IMR-90 (cell line): ENCODE measurements at regions of chr2 and their contacts with region 1.

Region 1: GRCh38 chr2:11743846-11744553 is 2.4 kb upstream of the LPIN1 start:
- DNase-seq: peak; percentile 100
- ATAC-seq: peak; percentile 87
- H3K4me3 ChIP-seq: peak overlapping the region; percentile 10
- H3K27ac ChIP-seq: peak overlapping the region; percentile 88
- H3K4me1 ChIP-seq: peaks cover 16% of the 10 kb centered on the region
- H3K27me3 ChIP-seq: no peaks in the 10 kb centered on the region
- CTCF ChIP-seq: no peak
- POLR2A ChIP-seq: no peak
- RAD21 ChIP-seq: no peak

Region 2: GRCh38 chr2:10919771-10920621 is 824.0 kb before region 1 on chr2:
- CTCF ChIA-PET with region 1: no interaction called
- POLR2A ChIA-PET with region 1: no interaction called
- dilution Hi-C with region 1: no loop called
- in situ Hi-C with region 1: no loop called
- intact Hi-C with region 1: loop called (anchors 5 kb)
- DNase-seq: no peak
- ATAC-seq: no peak
- H3K4me3 ChIP-seq: no peak overlapping the region
- H3K27ac ChIP-seq: no peak overlapping the region
- H3K4me1 ChIP-seq: peaks cover 13% of the 10 kb centered on the region
- H3K27me3 ChIP-seq: no peaks in the 10 kb centered on the region
- CTCF ChIP-seq: no peak
- POLR2A ChIP-seq: no peak
- RAD21 ChIP-seq: no peak

Region 3: DNA sequence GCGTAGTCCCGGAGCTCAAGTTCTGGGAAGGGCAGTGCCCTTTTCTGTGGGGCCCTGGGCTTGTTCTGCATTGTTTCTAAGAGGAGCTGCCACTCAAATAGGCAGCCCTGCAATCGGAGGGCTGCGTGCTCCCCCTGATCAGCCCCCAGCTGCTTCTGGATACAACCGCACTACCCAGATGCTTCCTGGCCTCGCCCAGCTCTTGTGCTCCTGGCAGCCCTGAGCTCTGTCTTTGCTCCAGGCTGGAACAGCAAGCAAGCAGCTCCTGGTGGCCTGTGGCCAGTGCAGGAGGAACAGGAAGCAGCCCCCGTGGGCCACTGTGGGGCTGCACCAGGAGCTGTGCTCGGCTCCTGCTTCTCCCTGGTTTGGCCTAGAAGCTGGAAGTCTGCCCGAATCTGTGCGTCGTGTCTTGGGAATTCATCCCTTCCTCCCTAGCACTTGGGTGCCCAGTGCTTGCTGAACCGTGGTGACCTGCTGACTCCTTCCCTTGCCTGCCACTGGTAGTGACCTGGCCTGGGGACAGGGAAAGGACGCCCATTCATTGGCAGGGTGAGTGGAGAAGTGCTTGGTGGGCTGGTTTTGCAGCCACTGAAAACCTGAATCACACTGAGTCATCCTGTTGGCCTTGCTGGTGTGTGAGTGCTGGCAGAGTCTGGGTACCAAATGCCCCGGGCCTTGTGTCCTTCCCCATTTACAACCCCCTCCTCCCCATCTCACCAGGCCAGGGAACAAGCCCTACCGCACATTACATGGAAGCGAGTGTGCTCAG is 46.7 kb before region 1 on chr2:
- CTCF ChIA-PET with region 1: interaction called, 6 read pairs
- POLR2A ChIA-PET with region 1: no interaction called
- dilution Hi-C with region 1: no loop called
- in situ Hi-C with region 1: loop called (anchors 5 kb)
- intact Hi-C with region 1: no loop called
- DNase-seq: peak; percentile 71
- ATAC-seq: peak; percentile 56
- H3K4me3 ChIP-seq: no peak overlapping the region
- H3K27ac ChIP-seq: peak overlapping the region; percentile 16
- H3K4me1 ChIP-seq: peaks cover 21% of the 10 kb centered on the region
- H3K27me3 ChIP-seq: no peaks in the 10 kb centered on the region
- CTCF ChIP-seq: no peak
- POLR2A ChIP-seq: no peak
- RAD21 ChIP-seq: no peak

Region 4: GRCh38 chr2:11778923-11779757 is 35.1 kb after region 1 on chr2:
- CTCF ChIA-PET with region 1: interaction called, 7 read pairs
- POLR2A ChIA-PET with region 1: interaction called, 4 read pairs
- dilution Hi-C with region 1: no loop called
- in situ Hi-C with region 1: no loop called
- intact Hi-C with region 1: loop called (anchors 2 kb)
- DNase-seq: peak; percentile 48
- ATAC-seq: peak; percentile 92
- H3K4me3 ChIP-seq: no peak overlapping the region
- H3K27ac ChIP-seq: no peak overlapping the region
- H3K4me1 ChIP-seq: peaks cover 5% of the 10 kb centered on the region
- H3K27me3 ChIP-seq: no peaks in the 10 kb centered on the region
- CTCF ChIP-seq: peak; percentile 97
- POLR2A ChIP-seq: no peak
- RAD21 ChIP-seq: peak; percentile 95